Caco-2 (cell line): ENCODE measurements at regions of chr22 and their contacts with region 1.

Region 1: DNA sequence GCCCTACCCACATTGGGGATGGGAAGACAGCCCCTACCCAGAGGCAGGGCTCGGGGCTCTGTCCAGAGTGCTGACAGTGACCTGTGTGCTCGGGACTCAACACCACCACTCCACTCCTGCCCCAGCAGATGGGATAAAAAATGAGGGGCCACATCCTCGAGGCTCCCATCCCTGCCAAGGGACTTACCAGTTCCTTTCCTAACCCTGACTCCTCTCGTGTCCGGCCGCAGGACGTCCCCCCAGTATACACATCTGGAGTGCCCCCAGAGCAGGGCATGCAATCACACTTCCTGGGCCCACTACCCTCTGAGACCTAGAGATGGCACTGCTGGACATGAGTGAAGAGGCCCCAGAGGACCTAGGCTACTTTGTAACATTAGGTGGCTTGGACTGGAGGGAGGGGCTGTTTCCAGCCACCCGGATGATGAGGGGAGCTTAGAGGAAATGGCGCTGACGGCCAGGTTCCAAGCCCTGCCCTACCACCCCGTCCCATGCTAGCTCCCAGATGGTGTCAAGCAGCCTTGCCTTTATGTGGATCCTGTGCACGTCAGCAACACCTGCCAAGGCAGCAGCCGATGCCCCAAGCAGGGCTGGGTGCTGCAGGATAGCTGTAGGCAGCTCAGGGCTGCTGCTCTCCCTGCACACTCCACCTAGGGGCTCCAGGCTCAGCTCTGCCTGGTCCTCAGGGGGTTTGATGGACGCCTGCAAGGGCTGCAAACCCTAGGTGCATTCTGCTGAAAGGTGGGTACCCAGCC is 86.6 kb downstream of the DGCR2 start:
- DNase-seq: peak; percentile 34 to 45
- H3K4me3 ChIP-seq: no peak overlapping the region
- H3K4me3 Mint-ChIP-seq: no peak overlapping the region
- H3K27ac Mint-ChIP-seq: no peak overlapping the region
- H3K4me1 ChIP-seq: no peaks in the 10 kb centered on the region
- H3K4me1 Mint-ChIP-seq: no peaks in the 10 kb centered on the region
- H3K27me3 ChIP-seq: no peaks in the 10 kb centered on the region
- H3K27me3 Mint-ChIP-seq: no peaks in the 10 kb centered on the region
- CTCF ChIP-seq: peak in 1 of 2 experiments; percentile 8

Region 2: DNA sequence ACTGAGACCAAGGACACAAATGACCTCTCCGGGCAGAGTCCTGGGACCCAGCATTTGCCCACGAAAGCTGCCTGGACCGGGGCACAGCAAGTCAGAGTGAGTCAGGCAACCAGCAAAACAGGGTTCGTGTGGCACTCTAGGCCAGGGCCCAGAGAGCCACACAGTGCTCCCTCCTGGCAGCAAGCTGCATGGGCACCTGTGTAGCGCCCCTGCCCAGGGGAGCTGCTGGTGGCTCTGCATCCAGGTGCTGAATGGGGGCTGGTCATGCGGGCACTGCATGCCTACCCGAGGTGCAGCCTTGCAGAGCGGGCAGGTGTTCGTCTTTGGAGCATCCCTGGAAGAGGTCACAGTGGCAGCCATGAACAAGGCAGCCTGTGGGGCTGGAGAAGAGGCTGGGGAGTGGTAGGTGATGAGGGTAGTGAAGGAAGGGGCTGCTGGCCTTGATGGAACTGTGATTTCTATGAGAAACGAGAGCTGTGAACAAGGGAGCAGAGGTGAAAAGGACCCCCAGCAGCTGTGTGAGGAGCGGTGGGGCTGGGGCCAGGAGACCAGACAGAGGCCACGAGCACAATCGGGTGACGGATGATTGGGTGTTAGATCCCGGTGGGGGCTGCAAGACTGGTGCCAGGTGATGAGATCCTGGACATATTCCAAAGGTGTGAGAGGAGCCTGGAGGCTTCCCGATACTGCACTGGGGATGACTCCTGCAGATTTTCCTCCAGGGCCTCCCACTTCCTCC is 23.2 kb after region 1 on chr22:
- CTCF ChIA-PET with region 1: no interaction called
- POLR2A ChIA-PET with region 1: no interaction called
- intact Hi-C with region 1: no loop called
- DNase-seq: no peak
- H3K4me3 ChIP-seq: no peak overlapping the region
- H3K4me3 Mint-ChIP-seq: no peak overlapping the region
- H3K27ac Mint-ChIP-seq: no peak overlapping the region
- H3K4me1 ChIP-seq: no peaks in the 10 kb centered on the region; the same call in 1 of the 2 replicates
- H3K4me1 Mint-ChIP-seq: no peaks in the 10 kb centered on the region
- H3K27me3 ChIP-seq: no peaks in the 10 kb centered on the region
- H3K27me3 Mint-ChIP-seq: no peaks in the 10 kb centered on the region
- CTCF ChIP-seq: no peak

Region 3: DNA sequence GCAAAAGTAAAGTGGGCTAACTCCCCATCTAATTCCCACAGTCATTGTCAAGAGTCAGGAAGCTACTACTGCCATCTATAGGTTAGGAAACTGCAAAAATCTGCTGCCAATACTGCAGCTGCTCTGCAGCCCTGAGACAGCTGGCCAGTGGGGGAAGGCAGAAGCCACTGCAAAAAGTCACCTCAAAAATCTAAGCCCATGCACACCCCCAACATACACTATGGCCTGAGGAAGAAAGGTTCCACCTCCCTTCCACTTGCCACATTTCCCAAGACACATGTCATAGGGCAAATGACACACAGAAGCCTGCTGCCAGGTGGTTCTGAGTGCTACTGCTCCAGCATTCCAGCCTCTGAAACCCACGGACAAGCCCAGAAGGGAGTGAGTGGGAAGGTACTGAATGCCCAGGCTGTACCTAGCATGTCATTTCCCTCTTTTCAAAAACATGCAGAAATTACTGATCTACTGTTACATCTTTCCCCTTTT is 49.6 kb after region 1 on chr22:
- CTCF ChIA-PET with region 1: no interaction called
- POLR2A ChIA-PET with region 1: no interaction called
- intact Hi-C with region 1: loop called (anchors 10 kb)
- DNase-seq: peak in 1 of 2 experiments; percentile 24
- H3K4me3 ChIP-seq: no peak overlapping the region
- H3K4me3 Mint-ChIP-seq: no peak overlapping the region
- H3K27ac Mint-ChIP-seq: no peak overlapping the region
- H3K4me1 ChIP-seq: no peaks in the 10 kb centered on the region
- H3K4me1 Mint-ChIP-seq: no peaks in the 10 kb centered on the region
- H3K27me3 ChIP-seq: no peaks in the 10 kb centered on the region
- H3K27me3 Mint-ChIP-seq: no peaks in the 10 kb centered on the region
- CTCF ChIP-seq: peak; percentile 35 to 38